ENCODE measurements at regions of chr3 and their contacts with region 1.

Region 1: GRCh38 chr3:132038198-132038825 is 3.5 kb upstream of the CPNE4 start:
- DNase-seq: no peak
- H3K4me3 ChIP-seq: no peak overlapping the region
- H3K27ac ChIP-seq: no peak overlapping the region
- H3K4me1 ChIP-seq: peaks cover 0 to 6% of the 10 kb centered on the region in 2 donors
- H3K27me3 ChIP-seq: no peaks in the 10 kb centered on the region
- CTCF ChIP-seq: peak in 2 of 3 experiments; percentile 14 to 40

Region 2: DNA sequence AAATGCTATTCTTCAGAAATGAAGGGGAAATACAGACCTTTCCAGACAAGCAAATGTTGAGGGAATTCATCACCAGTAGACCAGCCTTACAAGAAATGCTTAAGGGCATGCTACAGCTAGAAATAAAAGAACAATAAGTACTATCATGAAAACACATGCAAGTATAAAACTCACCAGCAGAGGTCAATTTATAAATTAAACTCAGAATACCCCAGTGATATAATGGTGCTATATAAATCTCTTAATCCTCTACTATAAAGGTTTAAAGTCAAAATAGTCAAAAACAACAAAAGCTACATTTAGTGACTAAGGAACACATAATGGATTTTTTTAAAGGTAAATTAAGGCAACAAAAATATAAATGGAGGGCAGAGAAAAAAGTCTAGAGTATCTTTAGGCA is 146.0 kb before region 1 on chr3:
- intact Hi-C with region 1: no loop called
- DNase-seq: no peak
- H3K4me3 ChIP-seq: no peak overlapping the region
- H3K27ac ChIP-seq: no peak overlapping the region
- H3K4me1 ChIP-seq: no peaks in the 10 kb centered on the region
- H3K27me3 ChIP-seq: no peaks in the 10 kb centered on the region
- CTCF ChIP-seq: no peak

Region 3: GRCh38 chr3:132180337-132180791 is 142.1 kb after region 1 on chr3:
- intact Hi-C with region 1: loop called (anchors 1 kb)
- DNase-seq: no peak
- H3K4me3 ChIP-seq: no peak overlapping the region
- H3K27ac ChIP-seq: no peak overlapping the region
- H3K4me1 ChIP-seq: no peaks in the 10 kb centered on the region
- H3K27me3 ChIP-seq: no peaks in the 10 kb centered on the region
- CTCF ChIP-seq: peak; percentile 15 to 60 (median 37)

Measured in ascending aorta (tissue), 2 donors.